ENCODE measurements at regions of chr14 and their contacts with region 1.

Region 1: GRCh38 chr14:24431569-24432258 is 2.0 kb downstream of the KHNYN start:
- DNase-seq: peak; percentile 93
- H3K4me3 ChIP-seq: no peak overlapping the region
- H3K27ac ChIP-seq: peak overlapping the region; percentile 92 to 98
- H3K4me1 ChIP-seq: peaks cover 29% of the 10 kb centered on the region
- H3K27me3 ChIP-seq: no peaks in the 10 kb centered on the region
- CTCF ChIP-seq: peak; percentile 75 to 87 (median 76)
- POLR2A ChIP-seq: no peak

Region 2: DNA sequence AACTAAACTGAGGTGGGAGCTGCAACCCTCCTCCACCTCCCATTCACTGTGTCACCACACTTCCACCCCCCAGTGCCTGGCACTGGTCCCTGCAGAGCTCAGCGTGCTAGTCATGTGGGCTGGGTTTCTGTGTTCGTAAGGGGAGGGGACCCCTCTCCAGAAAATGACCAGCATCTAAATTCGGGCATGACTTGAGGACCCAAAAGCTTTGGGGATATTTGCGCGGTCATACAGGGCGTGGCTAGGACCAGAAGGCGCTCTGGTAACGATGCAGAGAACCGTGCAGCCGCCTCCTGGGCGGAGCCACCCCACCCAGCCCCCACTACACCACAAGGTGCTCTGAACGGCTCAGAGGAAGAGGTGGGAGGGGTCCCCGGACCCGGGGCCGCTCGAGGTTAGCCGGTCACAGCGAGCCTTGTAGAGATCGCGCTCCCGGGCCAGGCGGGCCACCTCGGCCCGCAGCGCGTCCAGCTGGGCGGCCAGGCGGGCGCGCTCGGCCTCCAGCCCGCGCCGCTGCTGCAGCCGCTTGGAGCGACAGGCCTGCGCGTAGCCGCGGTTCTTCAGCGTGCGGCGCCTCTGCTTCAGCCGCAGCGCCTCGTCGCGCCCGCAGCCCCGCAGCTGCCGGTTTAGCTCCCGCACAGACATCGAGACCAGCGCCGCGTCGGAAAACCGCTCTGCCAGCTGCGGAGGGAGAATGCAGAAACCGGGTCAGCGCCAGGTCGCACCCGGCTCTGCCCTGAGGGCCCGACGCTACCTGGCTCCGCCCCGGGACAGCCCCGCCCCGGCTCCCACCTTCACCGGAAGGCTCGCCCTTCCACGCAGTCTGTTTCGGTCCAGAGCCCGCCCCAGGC is 350.6 kb before region 1 on chr14:
- intact Hi-C with region 1: no loop called
- DNase-seq: peak; percentile 69
- H3K4me3 ChIP-seq: peak overlapping the region; percentile 56
- H3K27ac ChIP-seq: peak overlapping the region in 1 of 2 donors; percentile 14
- H3K4me1 ChIP-seq: peaks cover 4% of the 10 kb centered on the region
- H3K27me3 ChIP-seq: no peaks in the 10 kb centered on the region
- CTCF ChIP-seq: no peak
- POLR2A ChIP-seq: no peak

Region 3: GRCh38 chr14:24332268-24332993 is 99.3 kb before region 1 on chr14:
- intact Hi-C with region 1: loop called (anchors 5 kb)
- DNase-seq: peak; percentile 79
- H3K4me3 ChIP-seq: no peak overlapping the region
- H3K27ac ChIP-seq: no peak overlapping the region
- H3K4me1 ChIP-seq: peaks cover 21% of the 10 kb centered on the region
- H3K27me3 ChIP-seq: no peaks in the 10 kb centered on the region
- CTCF ChIP-seq: peak; percentile 49 to 78 (median 72)
- POLR2A ChIP-seq: no peak

Region 4: DNA sequence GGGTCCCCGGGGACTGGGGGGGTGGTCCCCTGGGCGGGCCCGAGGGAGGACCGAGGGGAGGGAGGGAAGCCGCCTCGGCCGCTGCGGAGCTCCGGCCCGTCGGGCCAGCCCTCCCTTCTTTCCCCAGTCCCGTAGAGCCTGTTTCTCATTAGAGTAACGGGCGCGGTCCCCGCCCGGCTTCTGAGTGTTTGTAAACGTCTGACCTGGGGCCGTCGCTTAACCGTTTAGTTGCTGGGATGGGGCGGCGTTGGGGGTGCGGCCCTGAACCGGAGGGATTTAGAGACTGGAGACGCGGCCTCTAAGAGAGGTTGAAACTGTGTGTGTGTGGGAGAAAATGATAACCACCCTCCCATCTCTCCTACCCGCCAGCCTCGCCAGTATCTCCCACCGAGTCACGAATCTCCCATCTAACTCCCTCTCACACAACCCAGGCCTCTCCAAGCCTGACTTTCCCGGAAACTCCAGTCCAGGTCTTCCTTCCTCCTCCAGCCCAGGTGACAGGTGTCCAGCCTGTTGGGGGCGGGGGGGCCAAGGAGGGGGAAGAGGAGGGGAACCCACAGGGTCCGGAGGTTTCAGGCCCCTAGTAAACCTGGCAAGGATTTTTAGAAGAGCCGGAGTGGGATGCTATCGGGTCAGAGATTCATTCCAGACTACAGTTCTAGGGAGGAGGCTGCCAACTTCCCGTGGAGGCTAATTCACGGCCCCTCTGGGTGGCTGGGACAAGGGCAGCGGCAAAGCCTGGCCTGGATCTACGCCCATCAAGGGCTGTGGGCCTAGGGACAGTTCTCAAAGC is 64.8 kb before region 1 on chr14:
- intact Hi-C with region 1: loop called (anchors 5 kb)
- DNase-seq: peak; percentile 88
- H3K4me3 ChIP-seq: peak overlapping the region; percentile 19 to 62
- H3K27ac ChIP-seq: peak overlapping the region; percentile 80 to 87
- H3K4me1 ChIP-seq: peaks cover 16% of the 10 kb centered on the region
- H3K27me3 ChIP-seq: no peaks in the 10 kb centered on the region
- CTCF ChIP-seq: no peak
- POLR2A ChIP-seq: peak; percentile 9

Measured in testis (tissue), 5 donors.